Calu3 (cell line): ENCODE measurements at regions of chr20 and their contacts with region 1.

Region 1: GRCh38 chr20:50750145-50750671 is 18.8 kb downstream of the PARD6B start:
- DNase-seq: no peak
- H3K4me3 Mint-ChIP-seq: peak overlapping the region; percentile 39
- H3K27ac Mint-ChIP-seq: peak overlapping the region; percentile 86
- H3K4me1 Mint-ChIP-seq: peaks cover 67% of the 10 kb centered on the region
- H3K27me3 Mint-ChIP-seq: no peaks in the 10 kb centered on the region
- CTCF ChIP-seq: no peak

Region 2: GRCh38 chr20:50198180-50198666 is 552.0 kb before region 1 on chr20:
- CTCF ChIA-PET with region 1: interaction called, 13 read pairs
- intact Hi-C with region 1: no loop called
- DNase-seq: no peak
- H3K4me3 Mint-ChIP-seq: no peak overlapping the region
- H3K27ac Mint-ChIP-seq: no peak overlapping the region
- H3K4me1 Mint-ChIP-seq: peaks cover 37% of the 10 kb centered on the region
- H3K27me3 Mint-ChIP-seq: no peaks in the 10 kb centered on the region
- CTCF ChIP-seq: no peak

Region 3: DNA sequence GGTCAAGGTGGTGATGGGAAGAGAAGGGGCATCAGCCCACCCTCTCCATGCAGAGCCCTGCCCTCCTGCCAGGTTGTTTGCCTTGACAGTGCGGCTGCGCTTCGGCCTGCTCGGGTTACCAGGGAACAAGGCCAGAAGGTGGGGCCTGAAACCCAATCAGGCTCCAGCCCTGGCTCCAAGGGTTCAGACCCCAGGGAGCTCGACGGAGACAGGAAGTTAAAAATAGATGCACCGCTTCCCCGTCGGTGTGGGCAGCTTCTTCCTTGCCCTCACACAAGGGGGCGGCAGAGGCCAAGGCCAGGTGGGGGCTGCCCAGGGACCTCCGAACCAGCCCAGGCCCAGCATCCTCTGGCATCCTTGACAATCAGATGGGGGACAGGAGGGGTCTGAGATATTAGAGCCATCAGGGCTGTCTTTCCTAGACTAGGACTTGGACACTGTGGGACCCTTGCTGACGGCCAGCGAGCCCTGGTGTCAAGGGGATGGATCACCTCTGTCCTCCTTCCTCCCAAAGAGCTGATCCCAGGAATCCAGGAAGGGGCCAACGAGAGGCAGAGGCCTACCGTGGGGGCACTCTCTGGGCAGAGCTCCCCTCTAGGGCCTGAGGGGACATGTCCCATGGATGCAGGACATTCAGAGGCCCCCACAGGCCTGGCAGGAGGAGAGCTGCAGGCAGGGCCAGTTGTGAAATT is 124.1 kb before region 1 on chr20:
- CTCF ChIA-PET with region 1: interaction called, 38 read pairs
- intact Hi-C with region 1: loop called (anchors 5 kb)
- DNase-seq: peak; percentile 91
- H3K4me3 Mint-ChIP-seq: no peak overlapping the region
- H3K27ac Mint-ChIP-seq: peak overlapping the region; percentile 72
- H3K4me1 Mint-ChIP-seq: peaks cover 44% of the 10 kb centered on the region
- H3K27me3 Mint-ChIP-seq: no peaks in the 10 kb centered on the region
- CTCF ChIP-seq: peak; percentile 97

Region 4: GRCh38 chr20:50737352-50737751 is 12.9 kb before region 1 on chr20:
- CTCF ChIA-PET with region 1: interaction called, 21 read pairs
- intact Hi-C with region 1: no loop called
- DNase-seq: peak; percentile 46
- H3K4me3 Mint-ChIP-seq: peak overlapping the region; percentile 61
- H3K27ac Mint-ChIP-seq: peak overlapping the region; percentile 99
- H3K4me1 Mint-ChIP-seq: peaks cover 63% of the 10 kb centered on the region
- H3K27me3 Mint-ChIP-seq: no peaks in the 10 kb centered on the region
- CTCF ChIP-seq: no peak

Region 5: GRCh38 chr20:50762435-50763201 is 12.4 kb after region 1 on chr20:
- CTCF ChIA-PET with region 1: interaction called, 17 read pairs
- intact Hi-C with region 1: loop called (anchors 1 kb)
- DNase-seq: peak; percentile 73
- H3K4me3 Mint-ChIP-seq: peak overlapping the region; percentile 73
- H3K27ac Mint-ChIP-seq: peak overlapping the region; percentile 100
- H3K4me1 Mint-ChIP-seq: peaks cover 85% of the 10 kb centered on the region
- H3K27me3 Mint-ChIP-seq: no peaks in the 10 kb centered on the region
- CTCF ChIP-seq: no peak

Region 6: GRCh38 chr20:50931306-50932015 is 181.3 kb after region 1 on chr20 and contains the start of gene ADNP:
- CTCF ChIA-PET with region 1: no interaction called
- intact Hi-C with region 1: no loop called
- DNase-seq: peak; percentile 92
- H3K4me3 Mint-ChIP-seq: peak within 1 kb of the TSS; percentile 89
- H3K27ac Mint-ChIP-seq: peak within 1 kb of the TSS; percentile 96
- H3K4me1 Mint-ChIP-seq: peaks cover 28% of the 10 kb centered on the region
- H3K27me3 Mint-ChIP-seq: no peaks in the 10 kb centered on the region
- CTCF ChIP-seq: peak; percentile 87
- total RNA-seq, gene ADNP: 91.8 and 103 TPM in 2 replicates